Activated T-helper 1 cell treated with anti-CD3 and anti-CD28 coated beads, Interleukin-12 subunit alpha, Interleukin-12 subunit beta, Interleukin-2, Interleukin-4 antibody, amounts not matched to agents 30 ng/mL and 10 ng/mL and 1 ng/mL, durations not matched to agents 14 hours and 24 hours and 36 hours (primary cell): ENCODE measurements at regions of chr7 and their contacts with region 1.

Region 1: GRCh38 chr7:22640269-22640668 is 86.7 kb upstream of the IL6 start:
- DNase-seq: peak; percentile 24
- H3K4me3 Mint-ChIP-seq: no peak overlapping the region
- H3K27ac Mint-ChIP-seq: peak overlapping the region; percentile 3
- H3K4me1 Mint-ChIP-seq: peaks cover 16% of the 10 kb centered on the region
- H3K27me3 Mint-ChIP-seq: peaks cover 11% of the 10 kb centered on the region

Region 2: DNA sequence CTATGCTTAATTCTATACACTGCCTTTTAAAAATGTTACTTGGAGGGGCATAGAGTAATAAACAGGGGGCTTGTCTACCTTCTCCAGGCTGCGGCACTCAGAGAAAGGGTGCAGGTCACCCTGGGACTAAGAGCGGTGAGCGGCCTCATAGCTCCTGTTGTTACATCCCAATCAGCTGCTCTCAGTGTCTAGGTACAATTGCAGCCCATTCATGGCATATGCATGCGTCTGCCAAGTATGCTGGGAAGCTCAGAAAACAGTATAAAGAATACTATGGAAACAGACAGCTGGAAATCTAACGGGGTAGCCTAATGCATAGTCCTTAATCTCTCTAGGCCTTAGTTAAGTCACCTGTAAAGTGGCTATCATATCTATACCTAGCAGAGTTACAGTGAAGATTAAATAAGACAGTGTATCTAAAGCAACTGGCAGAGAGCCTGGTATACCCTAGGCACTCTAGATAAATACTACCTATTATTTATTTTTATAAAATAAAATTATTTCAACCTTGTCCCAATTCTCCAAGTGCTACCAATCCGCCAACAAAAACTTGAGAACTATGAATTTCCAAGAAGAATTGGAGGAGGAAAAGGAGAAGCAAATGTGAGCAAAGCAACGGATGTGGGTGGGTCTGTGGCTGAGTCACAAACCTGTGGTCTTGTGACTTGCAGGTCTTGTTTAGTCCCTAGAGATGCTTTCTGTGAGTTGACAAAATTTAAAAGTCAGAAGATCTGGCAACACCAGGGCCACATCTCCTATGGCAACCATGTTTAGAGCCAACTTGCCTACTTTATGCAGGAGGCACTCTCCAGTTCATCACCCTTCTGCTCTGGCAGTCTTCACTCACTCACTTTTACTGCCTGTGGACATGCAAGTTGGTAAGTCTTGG is 466.3 kb before region 1 on chr7:
- intact Hi-C with region 1: no loop called
- DNase-seq: peak; percentile 45
- H3K4me3 Mint-ChIP-seq: peak overlapping the region; percentile 24
- H3K27ac Mint-ChIP-seq: peak overlapping the region; percentile 57
- H3K4me1 Mint-ChIP-seq: peaks cover 20% of the 10 kb centered on the region
- H3K27me3 Mint-ChIP-seq: no peaks in the 10 kb centered on the region

Region 3: GRCh38 chr7:22452142-22452959 is 187.9 kb before region 1 on chr7:
- intact Hi-C with region 1: no loop called
- DNase-seq: peak; percentile 17
- H3K4me3 Mint-ChIP-seq: no peak overlapping the region
- H3K27ac Mint-ChIP-seq: no peak overlapping the region
- H3K4me1 Mint-ChIP-seq: peaks cover 18% of the 10 kb centered on the region
- H3K27me3 Mint-ChIP-seq: peaks cover 37% of the 10 kb centered on the region

Region 4: GRCh38 chr7:22559829-22560489 is 80.3 kb before region 1 on chr7:
- intact Hi-C with region 1: loop called (anchors 1 kb)
- DNase-seq: peak; percentile 55
- H3K4me3 Mint-ChIP-seq: no peak overlapping the region
- H3K27ac Mint-ChIP-seq: no peak overlapping the region
- H3K4me1 Mint-ChIP-seq: peaks cover 44% of the 10 kb centered on the region
- H3K27me3 Mint-ChIP-seq: peaks cover 9% of the 10 kb centered on the region

Region 5: GRCh38 chr7:22586786-22587140 is 53.5 kb before region 1 on chr7:
- intact Hi-C with region 1: loop called (anchors 1 kb)
- DNase-seq: no peak
- H3K4me3 Mint-ChIP-seq: no peak overlapping the region
- H3K27ac Mint-ChIP-seq: no peak overlapping the region
- H3K4me1 Mint-ChIP-seq: peaks cover 9% of the 10 kb centered on the region
- H3K27me3 Mint-ChIP-seq: peaks cover 43% of the 10 kb centered on the region

Region 6: GRCh38 chr7:22662036-22662435 is 21.8 kb after region 1 on chr7:
- intact Hi-C with region 1: loop called (anchors 1 kb)
- DNase-seq: no peak
- H3K4me3 Mint-ChIP-seq: no peak overlapping the region
- H3K27ac Mint-ChIP-seq: peak overlapping the region; percentile 69
- H3K4me1 Mint-ChIP-seq: peaks cover 39% of the 10 kb centered on the region
- H3K27me3 Mint-ChIP-seq: peaks cover 14% of the 10 kb centered on the region

Region 7: GRCh38 chr7:22697876-22698606 is 57.8 kb after region 1 on chr7:
- intact Hi-C with region 1: loop called (anchors 1 kb)
- DNase-seq: peak; percentile 26
- H3K4me3 Mint-ChIP-seq: peak overlapping the region; percentile 57
- H3K27ac Mint-ChIP-seq: peak overlapping the region; percentile 79
- H3K4me1 Mint-ChIP-seq: peaks cover 74% of the 10 kb centered on the region
- H3K27me3 Mint-ChIP-seq: peaks cover 3% of the 10 kb centered on the region

Region 8: GRCh38 chr7:22782616-22783232 is 142.5 kb after region 1 on chr7:
- intact Hi-C with region 1: no loop called
- DNase-seq: peak; percentile 57
- H3K4me3 Mint-ChIP-seq: no peak overlapping the region
- H3K27ac Mint-ChIP-seq: no peak overlapping the region
- H3K4me1 Mint-ChIP-seq: no peaks in the 10 kb centered on the region
- H3K27me3 Mint-ChIP-seq: peaks cover 8% of the 10 kb centered on the region

Region 9: DNA sequence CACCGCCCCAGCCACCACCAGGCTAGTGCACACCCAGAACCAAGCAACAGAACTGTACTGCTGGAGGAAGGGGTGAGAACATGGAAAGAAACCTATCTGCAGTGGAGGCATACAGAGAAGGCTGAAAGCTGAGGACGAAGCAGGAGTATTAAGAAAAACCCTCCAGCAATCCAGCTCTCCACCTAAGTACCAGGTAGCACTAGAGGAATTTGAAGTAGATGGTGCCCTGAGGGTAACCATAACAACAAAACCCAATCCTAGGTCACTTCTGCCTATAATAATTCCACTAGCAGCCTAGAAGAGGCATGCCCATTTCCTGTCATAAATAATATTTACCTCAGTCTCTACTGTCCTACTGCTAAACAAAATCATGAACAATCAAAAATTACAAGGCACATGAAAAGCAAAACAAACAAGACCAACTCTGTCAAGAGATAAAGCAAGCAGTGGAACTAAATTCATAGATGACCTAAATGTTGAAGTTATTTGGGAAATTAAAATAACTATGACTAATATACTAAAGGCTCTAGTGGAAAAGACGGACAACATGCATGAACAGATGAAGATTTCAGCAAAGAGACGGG is 322.6 kb after region 1 on chr7:
- intact Hi-C with region 1: no loop called
- DNase-seq: no peak
- H3K4me3 Mint-ChIP-seq: no peak overlapping the region
- H3K27ac Mint-ChIP-seq: no peak overlapping the region
- H3K4me1 Mint-ChIP-seq: no peaks in the 10 kb centered on the region
- H3K27me3 Mint-ChIP-seq: no peaks in the 10 kb centered on the region